Astrocyte of the cerebellum (primary cell): ENCODE measurements at regions of chr7 and their contacts with region 1.

Region 1: GRCh38 chr7:113622796-113623195 is 296.0 kb downstream of the PPP1R3A start:
- DNase-seq: no peak
- H3K4me3 ChIP-seq: no peak overlapping the region
- CTCF ChIP-seq: no peak

Region 2: GRCh38 chr7:112882991-112883390 is 739.8 kb before region 1 on chr7:
- in situ Hi-C with region 1: no loop called
- DNase-seq: no peak
- H3K4me3 ChIP-seq: no peak overlapping the region
- CTCF ChIP-seq: no peak

Region 3: DNA sequence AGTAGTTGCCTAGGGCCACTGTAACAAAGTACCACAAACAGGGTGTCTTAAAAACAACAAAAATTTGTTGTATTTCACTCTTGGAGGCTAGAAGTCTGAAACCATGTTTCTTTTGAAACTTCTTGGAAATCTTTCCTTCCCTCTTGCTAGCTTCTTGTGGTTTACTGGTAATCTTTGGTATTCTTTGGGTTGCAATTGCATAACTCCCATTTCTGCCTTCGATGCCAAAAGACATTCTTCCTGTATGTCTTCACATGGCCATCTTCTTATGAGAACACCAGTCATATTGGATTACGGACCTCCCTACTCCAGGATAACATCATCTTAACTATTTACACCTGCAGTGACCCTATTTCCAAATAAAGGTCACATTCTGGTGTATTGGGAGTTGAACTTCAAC is 61.4 kb before region 1 on chr7:
- in situ Hi-C with region 1: loop called (anchors 5 kb)
- DNase-seq: peak; percentile 49
- H3K4me3 ChIP-seq: no peak overlapping the region
- CTCF ChIP-seq: no peak

Region 4: DNA sequence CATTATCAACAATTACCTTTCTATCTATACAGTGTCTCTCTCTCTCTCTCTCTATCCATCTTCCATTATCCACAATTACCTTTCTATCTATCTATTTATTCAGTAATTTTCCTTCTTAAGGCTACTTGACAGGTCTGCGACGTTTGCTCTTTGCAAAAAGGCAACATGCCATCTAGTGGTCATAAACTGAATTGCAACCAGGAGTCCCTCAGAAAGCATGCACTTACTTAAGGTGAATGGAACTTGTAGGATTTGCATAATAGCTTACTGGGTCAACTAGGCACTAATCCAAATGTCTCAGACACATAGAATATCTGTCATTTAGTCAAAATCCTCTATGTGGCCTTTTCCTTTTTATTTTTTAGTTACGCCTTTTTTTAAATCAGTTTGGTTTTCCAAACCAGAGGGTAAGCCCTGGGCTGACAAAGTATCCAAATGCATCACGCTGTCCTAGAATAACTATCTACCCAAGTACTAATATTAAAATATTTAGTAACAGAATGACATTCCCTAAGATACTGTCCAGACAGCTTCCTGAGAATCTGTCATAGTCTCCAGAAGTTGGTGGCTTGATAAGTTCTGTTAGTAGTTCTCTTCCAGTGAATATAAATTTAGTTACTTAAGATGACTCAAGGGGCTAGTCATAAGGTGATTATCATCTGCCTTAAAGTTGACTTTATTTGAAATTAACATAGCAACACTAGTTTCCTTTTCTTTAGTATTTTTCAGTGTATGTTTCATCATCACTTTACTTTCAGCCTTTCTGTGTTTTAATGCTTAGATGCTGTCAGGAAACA is 87.7 kb after region 1 on chr7:
- in situ Hi-C with region 1: no loop called
- DNase-seq: peak; percentile 82
- H3K4me3 ChIP-seq: no peak overlapping the region
- CTCF ChIP-seq: peak; percentile 99